ENCODE measurements at regions of chr5 and their contacts with region 1.

Region 1: DNA sequence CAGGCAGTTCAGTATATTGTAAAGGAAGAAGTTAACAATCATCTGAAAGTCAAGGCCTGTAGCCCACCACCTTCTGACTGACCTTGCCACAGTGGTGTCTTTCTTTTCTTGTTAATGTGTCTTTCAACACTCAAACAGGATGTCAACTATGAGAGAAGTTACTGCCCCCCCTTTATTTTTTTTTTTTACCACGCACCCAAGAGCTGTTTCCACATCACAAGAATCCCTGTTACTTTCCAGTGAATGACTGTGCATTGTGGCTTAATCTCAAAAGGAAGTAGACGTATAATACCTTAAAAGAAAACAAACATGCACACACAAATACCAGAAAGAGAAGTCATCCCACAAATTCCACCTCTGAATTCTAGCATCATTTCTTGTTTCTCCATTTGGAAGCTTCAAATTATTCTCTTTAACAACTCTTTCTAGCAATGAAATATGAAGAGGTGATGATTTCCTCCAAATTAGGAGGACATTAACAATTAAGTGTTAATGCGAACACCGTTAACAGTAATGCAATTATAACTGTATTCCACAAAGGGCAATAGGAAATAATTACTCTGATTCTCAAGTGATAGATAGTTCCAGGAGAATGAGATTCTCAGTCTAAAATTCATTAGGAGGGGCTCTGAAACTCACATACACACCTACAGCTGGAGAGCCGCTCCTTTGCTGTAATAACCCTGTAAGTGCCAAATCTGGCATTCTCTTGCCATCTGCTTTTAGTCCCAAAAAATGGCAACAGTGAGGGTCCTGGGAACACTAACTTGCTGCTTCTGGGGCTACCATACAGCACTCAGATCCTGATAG is 201.0 kb downstream of the EFNA5 start:
- DNase-seq: peak; percentile 93
- H3K4me3 ChIP-seq: peak overlapping the region in 1 of 3 experiments; percentile 4
- H3K27ac ChIP-seq: peak overlapping the region; percentile 89
- H3K4me1 ChIP-seq: peaks cover 62% of the 10 kb centered on the region
- H3K27me3 ChIP-seq: no peaks in the 10 kb centered on the region
- CTCF ChIP-seq: no peak

Region 2: DNA sequence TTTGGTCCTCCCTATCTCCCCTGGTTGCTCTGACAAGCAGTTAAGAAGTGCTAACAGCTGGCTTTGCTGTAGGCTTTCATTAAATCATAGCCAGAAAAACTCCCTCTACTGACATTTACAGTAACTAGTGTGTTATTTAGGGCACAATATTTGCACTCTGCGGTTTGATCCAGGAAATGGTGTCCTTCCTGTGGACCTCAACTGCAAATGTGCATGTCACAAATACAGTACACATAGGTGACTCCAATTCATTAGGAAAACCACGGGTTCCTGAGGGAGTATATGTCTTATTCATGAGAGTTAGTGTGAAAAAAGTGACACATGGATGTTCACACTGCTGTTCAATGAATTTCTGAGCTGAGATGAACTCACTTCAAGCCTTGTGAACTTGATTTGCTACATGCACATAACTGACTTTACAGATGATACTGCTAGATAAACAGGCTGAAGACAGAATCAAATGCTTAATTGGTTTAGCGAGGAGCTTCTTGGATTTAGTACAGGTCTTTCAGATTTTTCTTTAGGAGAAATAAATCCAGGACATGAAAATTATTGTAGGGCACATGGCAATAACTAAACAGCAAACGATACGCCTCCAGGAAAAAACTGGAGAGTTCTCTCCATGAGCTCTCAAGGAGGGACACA is 80.4 kb before region 1 on chr5:
- CTCF ChIA-PET with region 1: no interaction called
- dilution Hi-C with region 1: loop called (anchors 5 kb)
- in situ Hi-C with region 1: no loop called
- intact Hi-C with region 1: loop called (anchors 2 kb)
- DNase-seq: peak; percentile 51
- H3K4me3 ChIP-seq: no peak overlapping the region
- H3K27ac ChIP-seq: peak overlapping the region; percentile 92
- H3K4me1 ChIP-seq: peaks cover 32% of the 10 kb centered on the region
- H3K27me3 ChIP-seq: no peaks in the 10 kb centered on the region
- CTCF ChIP-seq: peak in 1 of 2 donors; percentile 17

Region 3: GRCh38 chr5:107425541-107426256 is 44.0 kb before region 1 on chr5:
- CTCF ChIA-PET with region 1: no interaction called
- dilution Hi-C with region 1: no loop called
- in situ Hi-C with region 1: no loop called
- intact Hi-C with region 1: loop called (anchors 2 kb)
- DNase-seq: peak; percentile 85
- H3K4me3 ChIP-seq: no peak overlapping the region
- H3K27ac ChIP-seq: peak overlapping the region; percentile 76
- H3K4me1 ChIP-seq: peaks cover 52% of the 10 kb centered on the region
- H3K27me3 ChIP-seq: no peaks in the 10 kb centered on the region
- CTCF ChIP-seq: no peak

Region 4: DNA sequence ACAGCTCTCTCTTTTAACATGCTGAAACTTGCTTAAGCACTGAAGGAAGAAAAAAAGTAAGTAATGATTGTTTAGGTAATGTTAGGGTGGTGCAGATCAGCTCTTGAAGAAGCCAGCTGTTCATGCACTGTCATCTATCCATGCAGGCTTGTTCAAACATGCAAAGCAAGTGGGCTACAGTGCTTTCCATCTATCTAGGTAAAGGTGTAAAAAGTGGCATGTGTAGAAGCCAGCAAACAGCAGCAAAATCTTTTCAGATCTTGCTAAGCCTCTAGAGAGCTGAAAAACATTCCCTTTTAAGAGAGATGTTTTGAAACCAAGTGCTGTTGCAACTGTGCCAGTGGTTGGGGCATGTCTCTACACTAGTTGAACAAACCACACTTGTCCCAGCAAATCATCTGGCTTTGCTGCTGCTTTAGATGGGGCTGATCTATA is 13.4 kb before region 1 on chr5:
- CTCF ChIA-PET with region 1: no interaction called
- dilution Hi-C with region 1: no loop called
- in situ Hi-C with region 1: no loop called
- intact Hi-C with region 1: loop called (anchors 1 kb)
- DNase-seq: peak; percentile 89
- H3K4me3 ChIP-seq: no peak overlapping the region
- H3K27ac ChIP-seq: peak overlapping the region; percentile 70
- H3K4me1 ChIP-seq: peaks cover 37% of the 10 kb centered on the region
- H3K27me3 ChIP-seq: no peaks in the 10 kb centered on the region
- CTCF ChIP-seq: no peak

Region 5: DNA sequence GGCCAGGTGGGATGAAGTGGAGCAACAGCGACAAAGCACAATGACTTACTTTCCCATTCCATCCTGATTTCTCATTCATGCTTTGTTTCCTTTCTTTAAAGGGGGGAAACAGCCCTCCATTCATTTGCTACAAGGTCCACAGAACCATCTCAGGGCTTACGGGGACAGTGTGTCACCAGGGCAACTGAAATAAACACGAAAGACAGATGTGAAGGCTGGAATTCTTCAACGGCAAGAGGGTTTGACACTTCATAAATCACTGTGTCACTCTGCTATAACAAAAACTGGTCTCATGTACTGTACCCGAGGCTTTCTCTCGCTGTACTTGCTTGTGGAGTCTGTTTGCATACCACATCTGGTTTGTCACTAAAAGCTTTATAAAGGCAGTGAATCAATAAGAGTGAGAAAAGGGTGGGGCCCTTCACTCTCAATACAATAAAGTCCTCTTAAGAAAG is 50.2 kb after region 1 on chr5:
- CTCF ChIA-PET with region 1: no interaction called
- dilution Hi-C with region 1: no loop called
- in situ Hi-C with region 1: no loop called
- intact Hi-C with region 1: loop called (anchors 5 kb)
- DNase-seq: peak; percentile 29
- H3K4me3 ChIP-seq: no peak overlapping the region
- H3K27ac ChIP-seq: no peak overlapping the region
- H3K4me1 ChIP-seq: peaks cover 29% of the 10 kb centered on the region
- H3K27me3 ChIP-seq: no peaks in the 10 kb centered on the region
- CTCF ChIP-seq: no peak

Region 6: DNA sequence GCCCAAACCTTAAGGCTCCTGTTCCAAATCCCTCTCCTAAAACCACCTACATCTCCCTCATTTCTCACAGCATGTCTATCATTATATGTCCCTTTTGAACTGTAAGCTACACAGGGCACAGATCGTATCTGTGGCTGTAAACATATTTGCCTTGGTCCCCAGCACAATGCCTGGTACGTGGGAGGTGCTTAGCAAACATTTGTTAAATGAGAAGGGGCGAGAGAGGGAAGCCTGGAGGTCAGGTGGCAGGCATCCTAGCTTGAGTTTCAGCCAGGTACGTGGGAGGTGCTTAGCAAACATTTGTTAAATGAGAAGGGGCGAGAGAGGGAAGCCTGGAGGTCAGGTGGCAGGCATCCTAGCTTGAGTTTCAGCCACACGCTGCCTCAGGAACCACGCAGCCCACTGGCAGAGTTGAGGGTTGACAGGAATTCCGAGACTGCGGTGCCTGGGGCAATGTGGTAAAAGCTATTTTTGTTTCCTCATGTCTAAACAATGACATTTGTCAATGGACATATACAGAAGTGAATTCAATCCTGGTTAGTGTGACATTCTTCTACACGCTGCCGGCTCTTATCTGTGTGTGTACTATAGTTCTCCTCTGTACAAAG is 87.5 kb after region 1 on chr5:
- CTCF ChIA-PET with region 1: no interaction called
- dilution Hi-C with region 1: no loop called
- in situ Hi-C with region 1: no loop called
- intact Hi-C with region 1: loop called (anchors 5 kb)
- DNase-seq: peak; percentile 85
- H3K4me3 ChIP-seq: no peak overlapping the region
- H3K27ac ChIP-seq: peak overlapping the region; percentile 91
- H3K4me1 ChIP-seq: peaks cover 51% of the 10 kb centered on the region
- H3K27me3 ChIP-seq: no peaks in the 10 kb centered on the region
- CTCF ChIP-seq: peak in 1 of 2 donors; percentile 3

Region 7: GRCh38 chr5:107564896-107565512 is 95.3 kb after region 1 on chr5:
- CTCF ChIA-PET with region 1: no interaction called
- dilution Hi-C with region 1: loop called (anchors 5 kb)
- in situ Hi-C with region 1: loop called in 1 of 2 experiments (anchors 5 kb)
- intact Hi-C with region 1: no loop called
- DNase-seq: no peak
- H3K4me3 ChIP-seq: no peak overlapping the region
- H3K27ac ChIP-seq: no peak overlapping the region
- H3K4me1 ChIP-seq: peaks cover 37% of the 10 kb centered on the region
- H3K27me3 ChIP-seq: no peaks in the 10 kb centered on the region
- CTCF ChIP-seq: no peak